ENCODE measurements at regions of chr10 and their contacts with region 1.

Region 1: GRCh38 chr10:49552249-49552672 is 13.3 kb upstream of the ERCC6 start:
- DNase-seq: peak; percentile 72
- H3K4me3 Mint-ChIP-seq: peak overlapping the region; percentile 13
- H3K27ac Mint-ChIP-seq: peak overlapping the region; percentile 82
- H3K4me1 Mint-ChIP-seq: peaks cover 46% of the 10 kb centered on the region
- H3K27me3 Mint-ChIP-seq: no peaks in the 10 kb centered on the region
- CTCF ChIP-seq: no peak

Region 2: DNA sequence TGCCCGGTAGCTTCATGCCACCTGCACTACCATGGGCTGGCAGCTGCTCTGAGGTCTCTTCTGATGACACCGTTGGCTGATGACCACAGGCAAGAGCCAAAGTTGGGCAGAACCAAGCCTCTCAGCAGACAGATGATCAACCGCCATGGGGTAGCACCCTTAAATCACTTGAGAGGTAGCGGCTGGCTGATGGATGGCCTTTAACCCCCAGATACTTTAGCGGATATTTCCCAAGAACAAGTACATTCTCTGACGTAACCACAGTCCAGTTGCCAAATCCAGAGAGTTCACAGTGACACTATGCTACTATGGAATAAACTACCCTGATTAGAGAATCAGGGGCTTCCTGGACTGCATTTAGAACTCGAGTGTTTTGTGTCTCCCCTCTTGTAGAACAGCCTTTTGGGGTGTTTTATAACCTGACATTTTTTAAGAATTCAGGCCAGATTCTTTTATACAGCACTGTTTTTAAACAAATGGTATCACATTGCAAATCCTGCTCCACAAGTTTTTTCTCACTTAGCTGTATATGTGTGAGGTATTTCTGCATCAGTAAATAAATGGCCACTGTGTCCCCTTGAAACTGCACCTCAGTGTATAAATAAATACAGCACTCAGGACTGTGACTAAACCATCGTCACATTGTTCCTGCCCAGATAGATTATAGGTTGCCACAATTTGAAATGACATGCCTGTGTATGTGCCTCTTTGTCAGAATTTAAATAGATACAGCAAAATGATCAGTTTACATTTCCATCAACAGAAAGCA is 125.5 kb before region 1 on chr10:
- CTCF ChIA-PET with region 1: no interaction called
- POLR2A ChIA-PET with region 1: no interaction called
- intact Hi-C with region 1: no loop called
- DNase-seq: peak; percentile 18
- H3K4me3 Mint-ChIP-seq: no peak overlapping the region
- H3K27ac Mint-ChIP-seq: no peak overlapping the region
- H3K4me1 Mint-ChIP-seq: no peaks in the 10 kb centered on the region
- H3K27me3 Mint-ChIP-seq: peaks cover 29% of the 10 kb centered on the region
- CTCF ChIP-seq: no peak

Region 3: DNA sequence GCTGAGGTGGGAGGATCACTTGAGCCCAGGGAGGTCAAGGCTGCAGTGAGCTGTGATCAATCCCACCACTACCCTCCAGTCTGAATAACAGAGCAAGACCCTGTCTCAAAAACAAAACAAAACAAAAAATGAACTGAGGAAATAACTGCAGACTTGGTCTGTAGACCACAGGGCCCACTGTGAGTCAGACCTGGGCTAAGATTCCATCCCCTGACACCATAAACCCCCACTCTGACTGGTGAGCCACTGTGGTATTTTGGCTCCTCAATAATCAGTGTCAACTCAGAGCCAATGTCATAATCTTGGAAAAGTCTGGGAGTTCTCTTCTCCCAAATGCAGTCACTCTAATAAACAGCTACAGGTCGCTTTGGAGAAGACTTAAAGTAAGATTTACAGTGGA is 10.6 kb after region 1 on chr10:
- CTCF ChIA-PET with region 1: interaction called, 20 read pairs
- POLR2A ChIA-PET with region 1: interaction called, 205 read pairs
- intact Hi-C with region 1: loop called (anchors 2 kb)
- DNase-seq: no peak
- H3K4me3 Mint-ChIP-seq: no peak overlapping the region
- H3K27ac Mint-ChIP-seq: no peak overlapping the region
- H3K4me1 Mint-ChIP-seq: peaks cover 35% of the 10 kb centered on the region
- H3K27me3 Mint-ChIP-seq: no peaks in the 10 kb centered on the region
- CTCF ChIP-seq: no peak

Region 4: GRCh38 chr10:49601857-49602256 is 49.6 kb after region 1 on chr10:
- CTCF ChIA-PET with region 1: no interaction called
- POLR2A ChIA-PET with region 1: no interaction called
- intact Hi-C with region 1: no loop called
- DNase-seq: peak; percentile 76
- H3K4me3 Mint-ChIP-seq: no peak overlapping the region
- H3K27ac Mint-ChIP-seq: no peak overlapping the region
- H3K4me1 Mint-ChIP-seq: peaks cover 9% of the 10 kb centered on the region
- H3K27me3 Mint-ChIP-seq: peaks cover 31% of the 10 kb centered on the region
- CTCF ChIP-seq: no peak

Measured in MCF 10A (cell line).